ENCODE measurements at regions of chr1 and their contacts with region 1.

Region 1: DNA sequence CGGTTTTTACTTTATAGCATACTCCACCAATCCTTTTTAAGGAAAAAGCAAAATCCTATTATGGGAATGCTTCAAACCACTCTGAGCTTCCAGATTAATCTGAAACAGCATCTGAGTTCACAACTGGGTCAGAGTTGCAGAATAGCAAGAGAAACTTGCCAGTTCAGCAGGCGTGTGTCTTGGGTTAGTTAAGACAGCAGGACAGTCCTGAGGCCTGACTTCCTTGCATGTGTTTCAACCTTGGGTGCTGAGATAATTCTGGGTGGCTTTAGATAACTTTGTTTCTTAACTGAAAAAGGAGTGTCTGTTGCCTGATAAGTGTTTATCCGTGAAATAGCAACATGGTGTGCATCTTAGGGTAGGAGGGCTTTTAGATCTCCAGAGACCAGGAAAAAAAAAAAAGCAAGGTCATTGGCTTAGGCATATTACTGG is 169.2 kb downstream of the DHRS3 start:
- DNase-seq: no peak
- H3K4me3 Mint-ChIP-seq: no peak overlapping the region
- H3K27ac Mint-ChIP-seq: peak overlapping the region; percentile 68
- H3K4me1 Mint-ChIP-seq: peaks cover 75% of the 10 kb centered on the region
- H3K27me3 Mint-ChIP-seq: no peaks in the 10 kb centered on the region

Region 2: GRCh38 chr1:12296623-12297022 is 152.1 kb before region 1 on chr1:
- CTCF ChIA-PET with region 1: no interaction called
- intact Hi-C with region 1: loop called (anchors 1 kb)
- DNase-seq: no peak
- H3K4me3 Mint-ChIP-seq: no peak overlapping the region
- H3K27ac Mint-ChIP-seq: peak overlapping the region; percentile 51
- H3K4me1 Mint-ChIP-seq: peaks cover 30% of the 10 kb centered on the region
- H3K27me3 Mint-ChIP-seq: no peaks in the 10 kb centered on the region

Region 3: GRCh38 chr1:12386130-12386529 is 62.6 kb before region 1 on chr1:
- CTCF ChIA-PET with region 1: interaction called, 3 read pairs
- intact Hi-C with region 1: loop called (anchors 1 kb)
- DNase-seq: peak; percentile 68
- H3K4me3 Mint-ChIP-seq: no peak overlapping the region
- H3K27ac Mint-ChIP-seq: peak overlapping the region; percentile 80
- H3K4me1 Mint-ChIP-seq: peaks cover 43% of the 10 kb centered on the region
- H3K27me3 Mint-ChIP-seq: no peaks in the 10 kb centered on the region

Region 4: DNA sequence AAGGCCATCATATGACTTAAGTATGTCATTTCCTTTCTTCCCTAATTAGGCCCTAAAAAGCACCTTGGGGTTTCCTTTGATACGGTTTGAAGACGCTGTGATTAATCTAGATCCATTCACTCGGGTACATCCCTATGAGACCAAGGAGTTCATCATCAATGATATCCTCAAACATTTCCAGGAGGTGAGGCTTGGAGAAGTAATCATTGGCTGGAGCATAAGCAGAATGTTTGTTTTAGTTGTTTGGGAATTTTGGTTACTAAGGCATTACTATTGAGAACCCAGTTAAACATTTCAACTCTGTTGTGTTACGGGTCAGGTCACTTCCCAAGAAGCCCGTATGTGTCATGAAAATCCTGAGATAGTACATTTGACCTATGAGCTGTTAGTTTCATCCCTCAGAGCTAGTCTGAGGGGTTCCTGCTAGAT is 33.7 kb before region 1 on chr1:
- CTCF ChIA-PET with region 1: no interaction called
- intact Hi-C with region 1: loop called (anchors 1 kb)
- DNase-seq: no peak
- H3K4me3 Mint-ChIP-seq: no peak overlapping the region
- H3K27ac Mint-ChIP-seq: peak overlapping the region; percentile 26
- H3K4me1 Mint-ChIP-seq: peaks cover 35% of the 10 kb centered on the region
- H3K27me3 Mint-ChIP-seq: no peaks in the 10 kb centered on the region

Region 5: GRCh38 chr1:12467570-12468286 is 19.0 kb after region 1 on chr1:
- CTCF ChIA-PET with region 1: no interaction called
- intact Hi-C with region 1: loop called (anchors 1 kb)
- DNase-seq: no peak
- H3K4me3 Mint-ChIP-seq: no peak overlapping the region
- H3K27ac Mint-ChIP-seq: peak overlapping the region; percentile 86
- H3K4me1 Mint-ChIP-seq: peaks cover 57% of the 10 kb centered on the region
- H3K27me3 Mint-ChIP-seq: no peaks in the 10 kb centered on the region

Region 6: DNA sequence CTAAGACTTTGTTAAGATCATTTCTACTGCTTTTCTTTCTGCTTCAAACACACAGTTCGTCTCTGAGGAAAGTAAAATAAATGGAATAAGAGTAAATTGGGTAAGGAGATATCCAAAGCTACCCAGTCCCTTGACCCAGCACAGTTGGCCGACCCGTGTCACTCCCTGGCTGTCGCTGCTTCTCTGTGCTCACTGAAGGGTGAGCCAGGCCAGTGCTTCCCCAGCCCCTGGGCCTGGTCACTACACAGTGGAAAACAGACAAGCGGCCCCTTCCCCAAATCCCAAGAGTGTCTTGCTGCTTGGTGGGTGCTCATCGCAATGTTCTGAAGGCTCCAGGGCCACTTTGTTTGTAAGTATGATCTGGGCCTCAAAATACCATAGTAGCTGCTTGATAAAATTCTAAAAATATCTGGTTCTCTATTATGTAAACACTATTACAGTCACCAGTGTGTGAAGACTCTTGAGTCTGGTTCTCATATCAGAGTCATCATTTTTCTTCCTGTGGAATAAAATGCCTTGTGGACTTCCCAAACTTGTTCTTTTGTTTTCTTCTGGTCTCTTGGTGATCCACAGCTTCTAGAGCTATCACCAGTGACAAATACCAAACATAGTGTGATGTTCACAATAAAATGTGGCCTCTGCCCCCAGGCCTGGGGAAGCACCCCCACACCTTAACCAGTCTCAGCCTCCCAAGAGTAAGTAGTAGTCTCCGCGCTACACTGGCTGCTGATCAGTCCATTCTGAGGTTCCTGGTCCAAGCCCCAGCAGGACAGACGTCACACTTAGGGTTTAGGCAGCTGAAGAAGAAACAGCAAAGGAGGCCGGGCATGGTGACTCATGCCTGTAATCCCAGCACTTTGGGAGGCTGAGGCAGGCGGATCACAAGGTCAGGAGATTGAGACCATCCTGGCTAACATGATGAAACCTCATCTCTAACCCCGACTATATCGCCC is 63.0 kb after region 1 on chr1:
- CTCF ChIA-PET with region 1: no interaction called
- intact Hi-C with region 1: loop called (anchors 2 kb)
- DNase-seq: no peak
- H3K4me3 Mint-ChIP-seq: peak overlapping the region; percentile 80
- H3K27ac Mint-ChIP-seq: peak overlapping the region; percentile 97
- H3K4me1 Mint-ChIP-seq: peaks cover 61% of the 10 kb centered on the region
- H3K27me3 Mint-ChIP-seq: no peaks in the 10 kb centered on the region

Region 7: GRCh38 chr1:12604114-12604874 is 155.5 kb after region 1 on chr1:
- CTCF ChIA-PET with region 1: interaction called, 4 read pairs
- intact Hi-C with region 1: loop called (anchors 1 kb)
- DNase-seq: peak; percentile 90
- H3K4me3 Mint-ChIP-seq: peak overlapping the region; percentile 10
- H3K27ac Mint-ChIP-seq: peak overlapping the region; percentile 79
- H3K4me1 Mint-ChIP-seq: peaks cover 71% of the 10 kb centered on the region
- H3K27me3 Mint-ChIP-seq: no peaks in the 10 kb centered on the region

Region 8: GRCh38 chr1:12778907-12779306 is 330.1 kb after region 1 on chr1:
- CTCF ChIA-PET with region 1: no interaction called
- intact Hi-C with region 1: no loop called
- DNase-seq: no peak
- H3K4me3 Mint-ChIP-seq: no peak overlapping the region
- H3K27ac Mint-ChIP-seq: no peak overlapping the region
- H3K4me1 Mint-ChIP-seq: no peaks in the 10 kb centered on the region
- H3K27me3 Mint-ChIP-seq: peaks cover 6% of the 10 kb centered on the region

Measured in activated naive CD4-positive, alpha-beta T cell treated with anti-CD3 and anti-CD28 coated beads for 36 hours (primary cell).